A549 (cell line): ENCODE measurements at regions of chr20 and their contacts with region 1.

Region 1: GRCh38 chr20:22385602-22386305 is 198.6 kb downstream of the FOXA2 start:
- DNase-seq: peak; percentile 64 to 74
- ATAC-seq: peak; percentile 73 to 89; a peak in 5 of 6 replicates
- H3K4me3 ChIP-seq: no peak overlapping the region
- H3K27ac ChIP-seq: peak overlapping the region; percentile 57 to 67
- H3K4me1 ChIP-seq: peaks cover 54% of the 10 kb centered on the region
- CTCF ChIP-seq: peak; percentile 90
- EP300 ChIP-seq: no peak
- POLR2A ChIP-seq: no peak
- RAD21 ChIP-seq: peak; percentile 99 to 100

Region 2: GRCh38 chr20:22371843-22372242 is 13.9 kb before region 1 on chr20:
- CTCF ChIA-PET with region 1: interaction called, 25 read pairs
- POLR2A ChIA-PET with region 1: no interaction called
- DNase-seq: no peak
- ATAC-seq: no peak
- H3K4me3 ChIP-seq: no peak overlapping the region
- H3K27ac ChIP-seq: no peak overlapping the region
- H3K4me1 ChIP-seq: peaks cover 38% of the 10 kb centered on the region
- CTCF ChIP-seq: no peak
- EP300 ChIP-seq: no peak
- POLR2A ChIP-seq: no peak
- RAD21 ChIP-seq: no peak

Region 3: DNA sequence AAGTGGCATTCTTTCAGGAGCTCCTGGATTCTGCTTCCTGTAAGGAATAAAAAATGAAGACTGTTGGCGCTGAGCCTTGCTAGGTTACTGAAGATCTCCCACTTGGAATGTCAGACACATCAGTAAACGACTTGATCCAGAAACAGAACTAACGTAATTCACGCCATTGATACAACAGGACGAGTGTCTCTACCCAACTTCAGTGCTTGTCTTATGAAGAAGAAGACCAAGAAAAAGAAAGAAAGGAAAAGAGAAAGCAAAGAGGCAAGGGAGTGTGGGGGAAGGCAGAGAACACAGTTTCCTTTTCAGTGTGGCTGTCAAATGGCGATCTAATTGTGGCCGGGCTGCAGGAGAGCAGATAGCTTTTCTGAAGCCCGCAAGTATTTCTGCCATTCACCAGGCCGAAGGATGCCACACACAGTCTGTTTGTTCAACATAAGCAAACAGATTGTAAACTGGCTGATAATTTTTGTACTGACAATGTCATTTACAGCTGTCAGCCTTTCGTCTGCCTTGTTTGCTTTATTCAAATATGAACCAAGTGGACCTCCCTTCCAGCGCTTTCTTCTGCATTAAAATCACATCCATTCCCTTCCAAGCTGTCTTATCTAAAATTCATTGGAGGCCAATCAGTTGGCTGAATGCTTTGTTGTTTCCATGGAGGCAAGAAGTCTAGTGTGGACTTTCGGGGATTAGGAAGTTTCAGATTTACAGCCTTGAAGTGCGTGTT is 18.0 kb after region 1 on chr20:
- CTCF ChIA-PET with region 1: interaction called, 16 read pairs
- POLR2A ChIA-PET with region 1: interaction called, 16 read pairs
- DNase-seq: peak in 1 of 2 experiments; percentile 92
- ATAC-seq: peak; percentile 62 to 78
- H3K4me3 ChIP-seq: peak overlapping the region; percentile 25
- H3K27ac ChIP-seq: peak overlapping the region; percentile 88 to 98
- H3K4me1 ChIP-seq: peaks cover 62% of the 10 kb centered on the region
- CTCF ChIP-seq: no peak; the same call in 2 of the 3 replicates
- EP300 ChIP-seq: peak; percentile 62 to 74; a peak in 2 of 5 replicates
- POLR2A ChIP-seq: no peak
- RAD21 ChIP-seq: peak in 1 of 2 experiments; percentile 9; a peak in 2 of 5 replicates

Region 4: DNA sequence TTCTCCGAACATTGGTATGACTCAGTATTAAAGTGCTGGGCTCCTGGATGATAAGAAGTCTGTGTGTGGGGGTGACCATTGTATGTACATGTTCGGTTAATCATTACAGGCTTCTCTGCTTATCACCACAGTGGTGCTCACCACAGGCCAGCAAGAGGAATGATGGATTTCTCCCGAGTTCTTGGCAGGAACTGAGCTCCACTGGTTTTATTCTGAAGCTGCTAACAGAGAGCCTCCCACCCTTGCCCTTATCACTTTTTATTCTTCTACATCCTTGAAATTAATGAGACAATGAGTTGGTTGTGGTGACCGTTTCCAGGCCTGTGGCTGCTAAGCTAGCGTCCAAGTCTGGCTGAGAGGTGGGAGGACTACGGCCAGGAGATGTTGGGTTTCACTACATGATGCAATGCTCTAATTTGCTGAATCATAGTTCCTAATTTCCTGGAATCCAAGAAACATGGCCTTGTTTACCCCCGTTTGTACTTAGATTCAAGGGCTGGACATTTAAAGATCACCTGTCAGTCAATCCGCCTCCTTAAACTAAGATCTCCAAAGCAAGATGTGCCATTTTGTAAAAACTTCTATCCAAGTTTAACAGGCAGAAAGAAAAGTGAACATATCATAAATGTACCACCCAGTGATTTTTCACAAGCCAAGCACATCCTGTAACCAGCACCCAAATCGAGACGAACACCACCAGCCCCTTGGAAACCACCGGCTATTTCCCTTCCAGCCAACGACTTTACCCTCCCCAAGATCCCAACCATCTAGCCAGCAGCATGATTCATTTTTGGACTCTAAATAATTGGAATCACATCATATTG is 26.1 kb after region 1 on chr20:
- CTCF ChIA-PET with region 1: interaction called, 4 read pairs
- POLR2A ChIA-PET with region 1: interaction called, 11 read pairs
- DNase-seq: peak; percentile 97 to 99
- ATAC-seq: peak; percentile 96 to 98
- H3K4me3 ChIP-seq: 0 out of 3 replicates have a peak overlapping the region, but pooled peaks have one; percentile 12
- H3K27ac ChIP-seq: peak overlapping the region; percentile 97 to 98
- H3K4me1 ChIP-seq: peaks cover 62% of the 10 kb centered on the region
- CTCF ChIP-seq: no peak
- EP300 ChIP-seq: peak; percentile 76 to 91
- POLR2A ChIP-seq: no peak
- RAD21 ChIP-seq: peak; percentile 44 to 52; a peak in 4 of 5 replicates